Transverse colon (tissue), 4 donors: ENCODE measurements at regions of chr16 and their contacts with region 1.

Region 1: DNA sequence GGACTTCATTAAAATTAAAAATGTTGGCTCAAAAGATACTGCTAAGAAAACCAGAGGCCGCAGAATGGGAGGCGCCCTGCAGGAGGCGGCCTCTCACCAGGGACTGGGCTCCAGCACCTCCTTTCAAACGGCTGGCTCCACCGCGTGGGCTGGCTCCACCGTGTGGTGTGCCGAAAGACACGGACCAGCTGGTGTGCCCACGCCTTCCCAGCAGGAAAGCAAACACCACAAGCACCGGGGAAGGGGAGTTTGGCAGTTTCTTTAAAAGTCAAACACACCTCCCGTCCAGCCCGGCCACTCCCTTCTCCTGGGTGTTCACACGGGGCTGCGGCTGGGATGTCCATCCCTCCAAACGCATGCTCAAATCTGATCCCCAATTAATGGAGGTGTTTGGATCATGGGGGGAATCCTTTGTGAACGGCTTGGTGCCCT is 13.9 kb downstream of the HAGH start:
- DNase-seq: peak; percentile 68
- H3K4me3 ChIP-seq: no peak overlapping the region
- H3K27ac ChIP-seq: peak overlapping the region in 2 of 4 donors; percentile 21 to 22
- H3K4me1 ChIP-seq: peaks cover 0 to 8% (median 6%) of the 10 kb centered on the region in 4 donors
- H3K27me3 ChIP-seq: no peaks in the 10 kb centered on the region
- CTCF ChIP-seq: peak; percentile 30 to 59 (median 46)
- EP300 ChIP-seq: no peak
- POLR2A ChIP-seq: no peak

Region 2: GRCh38 chr16:1794221-1794860 is 18.4 kb before region 1 on chr16:
- in situ Hi-C with region 1: no loop called
- intact Hi-C with region 1: no loop called
- DNase-seq: no peak
- H3K4me3 ChIP-seq: no peak overlapping the region
- H3K27ac ChIP-seq: no peak overlapping the region
- H3K4me1 ChIP-seq: peaks cover 0 to 9% (median 6%) of the 10 kb centered on the region in 4 donors
- H3K27me3 ChIP-seq: no peaks in the 10 kb centered on the region
- CTCF ChIP-seq: no peak
- EP300 ChIP-seq: no peak
- POLR2A ChIP-seq: no peak

Region 3: GRCh38 chr16:1839554-1839953 is 26.8 kb after region 1 on chr16:
- in situ Hi-C with region 1: no loop called
- intact Hi-C with region 1: loop called (anchors 1 kb)
- DNase-seq: no peak
- H3K4me3 ChIP-seq: no peak overlapping the region
- H3K27ac ChIP-seq: no peak overlapping the region
- H3K4me1 ChIP-seq: no peaks in the 10 kb centered on the region
- H3K27me3 ChIP-seq: no peaks in the 10 kb centered on the region
- CTCF ChIP-seq: no peak
- EP300 ChIP-seq: no peak
- POLR2A ChIP-seq: no peak